GM23248 (cell line): ENCODE measurements at regions of chr16 and their contacts with region 1.

Region 1: DNA sequence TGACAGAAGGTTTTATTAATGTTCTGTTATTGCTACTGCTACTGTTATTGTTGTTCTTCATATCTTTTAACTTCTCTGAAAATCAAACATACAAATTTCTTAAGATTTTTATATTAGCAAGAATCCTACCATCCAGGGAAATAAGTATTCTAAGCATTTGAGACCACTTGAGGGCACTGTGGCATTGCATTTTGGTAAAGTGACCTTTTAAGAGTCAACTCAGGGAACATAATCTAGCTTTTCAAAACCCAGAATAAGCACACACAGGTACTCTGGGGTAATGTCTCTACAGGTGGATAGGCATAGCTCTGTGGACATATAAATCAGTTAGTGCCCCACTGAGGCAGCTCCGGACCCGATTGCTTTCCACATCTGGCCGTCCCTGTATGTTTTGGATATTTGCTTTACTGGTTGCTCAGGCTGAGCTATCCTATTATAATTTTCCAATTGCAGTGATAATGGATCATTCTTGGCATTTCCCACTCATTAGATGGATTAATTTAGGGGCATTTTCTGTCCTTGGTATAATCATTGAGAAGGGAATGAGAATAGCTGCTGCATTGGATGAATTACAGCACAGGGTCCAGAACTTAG is 1425.1 kb upstream of the CDH8 start:
- DNase-seq: peak; percentile 61
- H3K4me3 ChIP-seq: no peak overlapping the region
- H3K27ac ChIP-seq: no peak overlapping the region
- H3K4me1 ChIP-seq: no peaks in the 10 kb centered on the region
- H3K27me3 ChIP-seq: no peaks in the 10 kb centered on the region

Region 2: GRCh38 chr16:63331111-63331510 is 130.2 kb before region 1 on chr16:
- in situ Hi-C with region 1: no loop called
- DNase-seq: no peak
- H3K4me3 ChIP-seq: no peak overlapping the region
- H3K27ac ChIP-seq: no peak overlapping the region
- H3K4me1 ChIP-seq: no peaks in the 10 kb centered on the region
- H3K27me3 ChIP-seq: no peaks in the 10 kb centered on the region

Region 3: DNA sequence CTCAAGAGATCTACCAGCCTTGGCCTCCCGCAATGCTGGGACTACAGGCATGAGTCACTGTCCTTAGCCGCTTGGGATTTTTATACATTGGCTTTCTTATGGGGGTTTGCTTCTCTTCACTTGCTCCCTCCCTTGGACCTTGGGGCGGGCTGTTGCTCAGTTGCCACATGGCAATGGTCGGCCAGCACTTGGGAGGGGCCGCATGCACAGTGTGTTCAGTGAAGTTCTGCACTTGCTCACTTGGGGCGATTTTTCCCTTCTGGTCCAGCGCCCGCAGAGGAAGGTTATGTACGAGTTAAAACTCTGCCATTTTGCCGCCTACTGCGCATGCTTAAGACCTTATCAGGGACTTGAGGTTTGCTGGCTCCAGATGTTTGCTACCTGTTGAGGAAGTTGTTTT is 57.6 kb before region 1 on chr16:
- in situ Hi-C with region 1: no loop called
- DNase-seq: no peak
- H3K4me3 ChIP-seq: no peak overlapping the region
- H3K27ac ChIP-seq: no peak overlapping the region
- H3K4me1 ChIP-seq: no peaks in the 10 kb centered on the region
- H3K27me3 ChIP-seq: no peaks in the 10 kb centered on the region

Region 4: GRCh38 chr16:64455254-64455653 is 993.9 kb after region 1 on chr16:
- in situ Hi-C with region 1: loop called (anchors 25 kb)
- DNase-seq: peak; percentile 45
- H3K4me3 ChIP-seq: no peak overlapping the region
- H3K27ac ChIP-seq: no peak overlapping the region
- H3K4me1 ChIP-seq: peaks cover 16% of the 10 kb centered on the region
- H3K27me3 ChIP-seq: no peaks in the 10 kb centered on the region

Region 5: DNA sequence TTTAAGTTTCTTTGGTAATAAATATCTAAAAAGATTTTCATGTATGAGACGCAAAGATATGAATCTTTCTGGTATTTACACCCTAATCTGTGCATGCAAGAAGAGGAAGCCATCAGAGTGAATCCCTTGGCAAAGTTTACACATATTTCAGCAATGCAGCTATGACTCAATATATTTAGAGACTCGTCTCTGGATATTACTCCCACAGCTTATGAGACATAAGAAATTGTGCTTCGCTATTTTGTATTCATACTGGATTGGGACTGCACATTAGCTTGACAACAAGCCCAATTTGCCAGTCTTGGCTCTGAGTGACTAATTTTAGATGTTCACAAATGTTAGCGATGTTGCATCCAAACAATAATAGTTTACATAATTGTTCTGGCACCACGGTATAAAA is 1128.5 kb after region 1 on chr16:
- in situ Hi-C with region 1: no loop called
- DNase-seq: peak; percentile 93
- H3K4me3 ChIP-seq: peak overlapping the region; percentile 13; the same call in 1 of the 2 replicates
- H3K27ac ChIP-seq: peak overlapping the region; percentile 78
- H3K4me1 ChIP-seq: peaks cover 21% of the 10 kb centered on the region
- H3K27me3 ChIP-seq: no peaks in the 10 kb centered on the region

Region 6: DNA sequence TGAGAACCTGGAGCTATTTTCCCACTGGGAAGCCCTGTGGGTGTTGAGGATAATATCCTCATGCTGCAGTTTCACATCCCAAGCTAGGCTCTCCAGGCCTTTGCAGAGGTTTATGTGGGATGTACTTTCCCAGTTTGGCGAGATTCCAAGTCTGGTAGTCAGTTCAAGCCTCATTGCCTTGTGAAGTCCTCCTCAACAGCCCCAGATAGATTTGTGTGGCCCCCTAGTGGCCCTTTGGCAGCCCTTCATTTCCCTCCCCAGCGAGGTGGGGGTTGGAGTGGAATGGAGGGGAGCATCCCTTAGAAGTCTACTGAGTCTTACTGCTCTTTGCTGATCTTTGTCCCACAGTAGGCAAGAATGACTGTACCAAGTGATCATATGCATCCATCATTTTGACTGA is 1522.6 kb after region 1 on chr16:
- in situ Hi-C with region 1: loop called (anchors 25 kb)
- DNase-seq: peak; percentile 83
- H3K4me3 ChIP-seq: no peak overlapping the region
- H3K27ac ChIP-seq: peak overlapping the region; percentile 56
- H3K4me1 ChIP-seq: peaks cover 14% of the 10 kb centered on the region; the same call in 1 of the 2 replicates
- H3K27me3 ChIP-seq: no peaks in the 10 kb centered on the region

Region 7: GRCh38 chr16:65117811-65118448 is 1656.6 kb after region 1 on chr16:
- in situ Hi-C with region 1: loop called (anchors 10 kb)
- DNase-seq: peak; percentile 89
- H3K4me3 ChIP-seq: peak overlapping the region; percentile 98
- H3K27ac ChIP-seq: peak overlapping the region; percentile 76
- H3K4me1 ChIP-seq: peaks cover 44% of the 10 kb centered on the region
- H3K27me3 ChIP-seq: no peaks in the 10 kb centered on the region